ENCODE measurements at regions of chr6 and their contacts with region 1.

Region 1: GRCh38 chr6:36685936-36686667 is 7.6 kb downstream of the CDKN1A start:
- DNase-seq: peak in 1 of 10 donors; percentile 25
- H3K4me3 ChIP-seq: no peak overlapping the region
- H3K27ac ChIP-seq: no peak overlapping the region
- H3K27me3 ChIP-seq: no peaks in the 10 kb centered on the region
- CTCF ChIP-seq: no peak

Region 2: GRCh38 chr6:36436466-36436865 is 249.6 kb before region 1 on chr6:
- intact Hi-C with region 1: loop called in 1 of 2 experiments (anchors 5 kb)
- DNase-seq: no peak
- H3K4me3 ChIP-seq: no peak overlapping the region
- H3K27ac ChIP-seq: no peak overlapping the region
- H3K27me3 ChIP-seq: no peaks in the 10 kb centered on the region
- CTCF ChIP-seq: no peak

Region 3: DNA sequence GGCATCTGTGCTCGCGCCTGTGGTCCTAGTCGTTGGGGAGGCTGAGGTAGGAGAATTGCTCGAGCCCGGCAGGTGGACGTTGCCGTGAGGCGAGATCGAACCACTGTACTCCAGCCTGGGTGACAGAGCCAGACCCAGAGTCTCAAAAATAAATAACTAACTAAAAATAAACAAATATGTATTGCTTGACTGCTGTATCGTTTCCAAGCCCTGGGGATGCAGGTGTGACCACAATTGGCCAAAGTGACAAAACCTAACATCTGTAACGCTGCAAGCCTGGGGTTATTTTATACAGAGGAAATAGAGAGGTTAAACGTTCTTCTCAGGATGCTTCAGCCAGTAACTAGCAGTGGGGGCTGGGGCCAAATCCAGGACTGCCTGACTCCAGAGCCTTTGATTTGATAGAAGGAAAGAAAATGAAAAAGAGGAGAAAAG is 93.9 kb before region 1 on chr6:
- intact Hi-C with region 1: no loop called
- DNase-seq: no peak
- H3K4me3 ChIP-seq: no peak overlapping the region
- H3K27ac ChIP-seq: no peak overlapping the region
- H3K27me3 ChIP-seq: no peaks in the 10 kb centered on the region
- CTCF ChIP-seq: no peak

Region 4: GRCh38 chr6:36827261-36828079 is 141.4 kb after region 1 on chr6:
- intact Hi-C with region 1: no loop called
- DNase-seq: no peak
- H3K4me3 ChIP-seq: peak overlapping the region in 1 of 59 donors; percentile 10
- H3K27ac ChIP-seq: peak overlapping the region in 31 of 59 donors; percentile 1 to 69 (median 34)
- H3K27me3 ChIP-seq: no peaks in the 10 kb centered on the region
- CTCF ChIP-seq: no peak

Region 5: GRCh38 chr6:38646166-38646878 is 1960.2 kb after region 1 on chr6:
- intact Hi-C with region 1: no loop called
- DNase-seq: no peak
- H3K4me3 ChIP-seq: no peak overlapping the region
- H3K27ac ChIP-seq: peak overlapping the region in 25 of 59 donors; percentile 4 to 70 (median 25)
- H3K27me3 ChIP-seq: no peaks in the 10 kb centered on the region
- CTCF ChIP-seq: no peak

Measured in dorsolateral prefrontal cortex (tissue), 120 donors.